ENCODE measurements at regions of chr15 and their contacts with region 1.

Region 1: DNA sequence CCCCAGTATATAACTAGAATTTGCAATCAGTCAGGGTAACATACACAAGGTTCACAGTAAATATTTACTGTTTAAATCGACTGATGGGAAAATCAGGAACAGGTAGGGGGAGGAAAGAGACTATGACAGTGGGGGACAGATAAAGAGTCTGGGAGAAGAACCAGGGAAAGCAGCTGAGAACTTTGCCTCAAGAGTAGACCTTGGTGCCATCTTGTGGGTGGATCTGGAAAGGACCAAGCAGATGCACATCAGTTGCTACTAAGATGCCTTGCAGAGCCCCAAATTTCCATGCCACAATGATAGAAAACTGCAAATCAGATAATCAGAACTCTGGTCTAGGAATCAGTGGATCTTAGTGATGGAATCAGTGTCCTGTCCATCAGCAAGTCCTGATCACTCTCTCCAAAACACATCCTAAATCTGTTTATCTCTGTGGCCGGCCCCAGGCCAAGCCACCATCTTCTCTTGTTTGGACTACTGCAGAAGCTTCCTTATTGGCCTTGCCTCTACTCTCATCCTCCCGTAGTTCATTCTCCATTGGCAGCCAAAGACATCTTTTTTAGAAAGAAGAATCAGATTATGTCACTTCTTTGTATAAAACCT is 62.7 kb downstream of the PDE8A start:
- ATAC-seq: peak in 4 of 8 experiments; percentile 43 to 92 (median 90)
- H3K4me3 ChIP-seq: no peak overlapping the region
- H3K27ac ChIP-seq: no peak overlapping the region
- H3K4me1 ChIP-seq: no peaks in the 10 kb centered on the region

Region 2: DNA sequence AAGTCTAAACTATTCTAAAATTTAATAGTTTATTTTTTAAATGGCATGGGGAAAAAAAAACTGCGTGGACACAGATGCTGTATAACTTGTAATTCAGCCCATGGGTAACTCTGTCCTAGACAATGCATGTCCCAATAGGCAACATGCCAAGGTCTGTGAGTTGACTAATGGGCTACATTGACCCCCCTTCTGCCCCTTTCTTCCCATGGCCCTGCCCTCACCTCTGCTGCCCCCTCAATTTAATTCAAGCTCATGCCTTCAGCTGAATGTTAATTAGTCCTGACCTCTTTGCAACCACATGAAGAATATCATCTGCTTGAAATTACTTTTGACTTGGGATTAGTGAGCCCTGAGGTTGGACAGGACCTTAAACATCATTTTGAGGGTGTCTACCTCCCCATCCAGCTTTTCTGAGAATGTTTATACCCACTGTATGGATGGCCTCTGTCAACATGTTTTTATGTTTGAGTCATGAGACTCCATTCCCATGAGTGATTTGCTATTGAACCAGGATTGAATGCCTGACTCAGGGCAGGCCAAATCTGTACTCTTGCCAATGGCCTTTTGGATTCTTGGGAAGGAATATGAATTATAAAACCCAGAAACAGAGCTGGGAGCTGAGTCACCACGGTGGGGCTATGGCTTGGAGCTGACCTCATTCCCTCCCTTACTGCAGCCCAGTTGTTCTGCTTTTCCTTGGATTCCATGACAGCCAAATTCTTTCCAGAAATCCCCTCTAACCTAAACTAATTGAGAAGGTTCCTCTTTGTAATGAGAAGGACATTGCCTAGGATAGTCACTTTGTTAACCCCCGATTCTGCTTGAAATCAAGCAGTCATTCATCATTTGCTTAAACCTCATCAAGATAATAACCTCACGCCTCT is 96.2 kb before region 1 on chr15:
- in situ Hi-C with region 1: no loop called
- ATAC-seq: peak in 6 of 8 experiments; percentile 26 to 86 (median 80)
- H3K4me3 ChIP-seq: no peak overlapping the region
- H3K27ac ChIP-seq: no peak overlapping the region
- H3K4me1 ChIP-seq: peaks cover 0 to 8% of the 10 kb centered on the region in 2 donors

Region 3: DNA sequence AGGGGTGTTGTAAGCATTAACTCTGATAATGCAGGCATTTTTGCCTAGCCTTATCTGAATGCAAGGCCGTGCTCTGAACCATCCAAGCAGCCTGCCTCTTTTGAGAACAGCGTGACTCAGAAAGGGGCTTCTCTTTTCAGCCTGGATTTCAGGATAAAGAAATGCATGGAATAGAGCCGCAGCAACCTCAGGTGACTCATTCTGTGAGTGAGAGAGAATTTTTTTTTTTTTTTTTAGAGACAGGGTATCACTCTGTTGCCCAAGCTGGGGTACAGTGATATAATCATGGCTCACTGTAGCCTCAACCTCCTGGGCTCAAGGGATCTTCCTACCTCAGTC is 83.3 kb before region 1 on chr15:
- in situ Hi-C with region 1: loop called in 1 of 9 experiments (anchors 10 kb)
- ATAC-seq: peak in 5 of 8 experiments; percentile 72 to 99 (median 84)
- H3K4me3 ChIP-seq: no peak overlapping the region
- H3K27ac ChIP-seq: no peak overlapping the region
- H3K4me1 ChIP-seq: no peaks in the 10 kb centered on the region

Measured in motor neuron (in vitro differentiated cells).